ENCODE measurements at regions of chr1 and their contacts with region 1.

Region 1: DNA sequence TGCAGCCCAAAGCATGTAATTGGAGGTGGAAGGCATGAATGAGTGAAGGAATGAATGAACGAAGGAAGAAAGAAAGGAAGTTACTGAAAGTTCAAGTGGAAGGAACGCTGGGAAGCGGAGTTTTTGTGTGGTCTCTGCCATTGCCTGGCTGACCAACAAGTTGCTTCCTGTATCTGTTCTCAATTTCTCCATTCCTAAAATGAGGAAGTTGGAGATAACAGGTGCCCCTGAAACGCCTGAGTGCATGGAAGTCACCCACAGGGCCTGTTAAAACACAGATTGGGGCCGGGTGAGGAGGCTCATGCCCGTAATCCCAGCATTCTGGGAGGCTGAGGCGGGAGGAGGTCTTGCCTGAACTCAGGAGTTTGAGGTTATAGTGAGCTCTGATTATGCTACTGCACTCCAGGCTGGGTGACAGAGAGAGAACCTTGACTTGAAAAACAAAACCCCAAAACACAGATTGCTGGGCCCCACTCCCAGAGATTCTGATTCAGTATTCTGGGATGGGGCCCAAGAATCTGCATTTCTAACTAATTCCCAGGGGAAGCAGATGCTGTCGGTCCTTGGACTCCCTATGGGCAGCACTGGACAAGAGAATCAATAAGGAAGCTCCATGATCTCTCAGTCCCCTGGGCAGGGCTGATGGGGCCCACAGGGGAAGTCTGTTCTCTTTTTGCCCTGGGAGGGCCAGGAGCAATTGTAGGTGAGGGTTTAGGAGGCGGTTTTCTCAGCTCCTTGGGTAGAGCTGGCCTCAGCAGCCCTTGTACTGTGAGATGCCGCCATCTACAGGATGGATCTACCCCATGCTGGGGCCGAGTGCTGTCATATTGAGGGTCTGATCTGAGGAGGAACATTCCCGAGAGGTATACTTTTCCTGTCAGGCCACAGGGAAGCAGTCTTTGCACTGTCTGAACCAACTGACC is 3.3 kb upstream of the CNR2 start:
- DNase-seq: peak; percentile 87
- CTCF ChIP-seq: peak; percentile 74

Region 2: GRCh38 chr1:23751050-23751814 is 165.2 kb before region 1 on chr1:
- CTCF ChIA-PET with region 1: no interaction called
- POLR2A ChIA-PET with region 1: no interaction called
- DNase-seq: peak; percentile 80
- CTCF ChIP-seq: peak; percentile 78

Region 3: DNA sequence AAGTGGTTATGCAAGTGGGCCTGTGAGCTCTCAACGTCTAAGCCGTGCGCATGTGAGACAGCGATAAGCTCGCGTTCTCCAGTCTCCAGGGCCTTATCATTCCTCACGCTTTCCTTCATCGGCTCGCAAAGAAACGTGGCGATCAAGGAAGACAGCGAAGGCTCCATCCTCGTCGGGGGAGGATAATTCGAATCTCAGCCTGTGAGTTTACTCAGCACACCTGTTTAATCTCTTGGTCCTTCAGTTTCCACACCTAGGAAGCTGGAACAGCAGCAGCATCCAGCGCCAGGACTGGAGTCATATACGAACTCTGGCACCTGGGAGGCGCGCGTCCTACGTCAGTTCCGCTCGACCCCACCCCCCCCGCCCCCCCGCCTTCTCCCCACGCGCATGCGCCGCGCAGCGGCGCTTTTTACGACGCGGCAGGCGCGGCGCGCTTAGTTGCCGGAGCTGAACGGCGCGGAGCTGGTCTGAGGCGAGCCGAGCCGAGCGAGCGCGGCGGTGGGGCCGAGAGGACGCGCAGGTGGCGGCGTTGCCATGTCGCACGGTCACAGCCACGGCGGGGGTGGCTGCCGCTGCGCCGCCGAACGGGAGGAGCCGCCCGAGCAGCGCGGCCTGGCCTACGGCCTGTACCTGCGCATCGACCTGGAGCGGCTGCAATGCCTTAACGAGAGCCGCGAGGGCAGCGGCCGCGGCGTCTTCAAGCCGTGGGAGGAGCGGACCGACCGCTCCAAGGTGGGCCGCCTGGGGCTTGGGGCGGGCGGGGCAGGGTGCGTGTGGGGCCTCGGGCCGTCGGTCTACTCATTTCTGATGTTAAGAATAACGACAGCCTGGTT is 138.3 kb before region 1 on chr1 and contains the start of gene PITHD1:
- CTCF ChIA-PET with region 1: interaction called, 67 read pairs
- POLR2A ChIA-PET with region 1: interaction called, 5 read pairs
- DNase-seq: peak; percentile 97
- CTCF ChIP-seq: peak; percentile 5

Region 4: GRCh38 chr1:23825076-23825761 is 91.3 kb before region 1 on chr1 and contains the start of gene HMGCL:
- CTCF ChIA-PET with region 1: interaction called, 16 read pairs
- POLR2A ChIA-PET with region 1: no interaction called
- DNase-seq: peak; percentile 95
- CTCF ChIP-seq: no peak

Region 5: GRCh38 chr1:23889074-23889473 is 27.4 kb before region 1 on chr1:
- CTCF ChIA-PET with region 1: interaction called, 10 read pairs
- POLR2A ChIA-PET with region 1: interaction called, 3 read pairs
- DNase-seq: peak; percentile 63
- CTCF ChIP-seq: no peak

Region 6: GRCh38 chr1:23930861-23931490 is 14.5 kb after region 1 on chr1:
- CTCF ChIA-PET with region 1: interaction called, 37 read pairs
- POLR2A ChIA-PET with region 1: no interaction called
- DNase-seq: peak; percentile 50
- CTCF ChIP-seq: no peak

Region 7: GRCh38 chr1:24043345-24044032 is 127.0 kb after region 1 on chr1:
- CTCF ChIA-PET with region 1: no interaction called
- POLR2A ChIA-PET with region 1: no interaction called
- DNase-seq: no peak
- CTCF ChIP-seq: no peak

Measured in GM10248 (cell line).